ENCODE measurements at regions of chr5 and their contacts with region 1.

Region 1: GRCh38 chr5:96601811-96602244 is 60.3 kb upstream of the CAST start:
- DNase-seq: peak; percentile 86
- H3K4me3 Mint-ChIP-seq: no peak overlapping the region
- H3K27ac Mint-ChIP-seq: no peak overlapping the region
- H3K4me1 Mint-ChIP-seq: peaks cover 6% of the 10 kb centered on the region
- H3K27me3 Mint-ChIP-seq: no peaks in the 10 kb centered on the region
- CTCF ChIP-seq: peak; percentile 65

Region 2: GRCh38 chr5:95858661-95859326 is 743.0 kb before region 1 on chr5:
- CTCF ChIA-PET with region 1: interaction called, 3 read pairs
- POLR2A ChIA-PET with region 1: interaction called, 3 read pairs
- intact Hi-C with region 1: loop called (anchors 1 kb)
- DNase-seq: peak; percentile 96
- H3K4me3 Mint-ChIP-seq: peak overlapping the region; percentile 67
- H3K27ac Mint-ChIP-seq: peak overlapping the region; percentile 99
- H3K4me1 Mint-ChIP-seq: peaks cover 57% of the 10 kb centered on the region
- H3K27me3 Mint-ChIP-seq: no peaks in the 10 kb centered on the region
- CTCF ChIP-seq: peak; percentile 93

Region 3: DNA sequence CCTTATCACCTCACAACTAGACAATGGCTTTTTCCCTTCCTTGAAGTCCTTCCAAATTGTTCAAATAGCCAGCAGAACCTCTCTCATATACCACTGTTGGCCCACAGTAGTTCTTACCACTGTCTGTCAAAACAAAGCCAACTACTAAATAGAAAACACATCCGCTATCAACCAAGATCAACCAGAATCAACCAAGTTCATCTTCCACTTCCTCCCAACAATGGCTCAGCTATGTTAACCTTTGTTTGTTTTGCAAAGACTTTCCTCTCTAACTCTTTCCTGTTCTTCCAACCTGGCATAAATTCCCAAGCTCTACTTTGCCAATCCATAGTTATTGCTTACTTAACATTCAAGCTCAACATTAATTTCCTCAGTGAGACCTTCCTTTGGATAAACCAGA is 655.4 kb before region 1 on chr5:
- CTCF ChIA-PET with region 1: no interaction called
- POLR2A ChIA-PET with region 1: no interaction called
- intact Hi-C with region 1: no loop called
- DNase-seq: no peak
- H3K4me3 Mint-ChIP-seq: no peak overlapping the region
- H3K27ac Mint-ChIP-seq: no peak overlapping the region
- H3K4me1 Mint-ChIP-seq: peaks cover 24% of the 10 kb centered on the region
- H3K27me3 Mint-ChIP-seq: no peaks in the 10 kb centered on the region
- CTCF ChIP-seq: no peak

Region 4: GRCh38 chr5:96247097-96247701 is 354.6 kb before region 1 on chr5:
- CTCF ChIA-PET with region 1: no interaction called
- POLR2A ChIA-PET with region 1: no interaction called
- intact Hi-C with region 1: no loop called
- DNase-seq: no peak
- H3K4me3 Mint-ChIP-seq: no peak overlapping the region
- H3K27ac Mint-ChIP-seq: peak overlapping the region; percentile 56
- H3K4me1 Mint-ChIP-seq: peaks cover 32% of the 10 kb centered on the region
- H3K27me3 Mint-ChIP-seq: no peaks in the 10 kb centered on the region
- CTCF ChIP-seq: no peak

Region 5: GRCh38 chr5:96344678-96345577 is 256.9 kb before region 1 on chr5:
- CTCF ChIA-PET with region 1: interaction called, 492 read pairs
- POLR2A ChIA-PET with region 1: interaction called, 16 read pairs
- intact Hi-C with region 1: loop called (anchors 1 kb)
- DNase-seq: peak; percentile 83
- H3K4me3 Mint-ChIP-seq: no peak overlapping the region
- H3K27ac Mint-ChIP-seq: no peak overlapping the region
- H3K4me1 Mint-ChIP-seq: peaks cover 16% of the 10 kb centered on the region
- H3K27me3 Mint-ChIP-seq: no peaks in the 10 kb centered on the region
- CTCF ChIP-seq: peak; percentile 67

Region 6: DNA sequence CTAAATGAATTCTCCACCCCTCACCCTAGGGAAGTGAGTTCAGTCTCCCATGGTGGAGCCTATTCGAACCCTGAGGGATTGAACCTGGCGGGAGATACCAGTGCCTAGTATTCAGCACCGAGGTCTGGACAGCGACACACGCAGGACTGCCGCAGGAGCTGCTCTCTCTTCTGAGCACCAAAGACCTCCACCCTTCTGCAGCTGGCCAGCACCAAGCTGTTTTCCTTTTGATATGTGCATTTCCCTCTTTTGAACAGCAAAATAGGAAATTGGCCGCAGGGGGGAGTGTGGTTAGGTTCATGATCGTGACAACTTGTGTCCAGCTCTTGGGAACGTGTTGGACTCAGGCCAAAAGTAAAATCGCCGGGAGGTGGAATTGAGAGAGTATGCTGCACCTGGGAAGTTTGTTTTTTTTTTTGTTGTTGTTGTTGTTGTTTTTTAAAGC is 167.6 kb before region 1 on chr5:
- CTCF ChIA-PET with region 1: interaction called, 11 read pairs
- POLR2A ChIA-PET with region 1: no interaction called
- intact Hi-C with region 1: no loop called
- DNase-seq: peak; percentile 78
- H3K4me3 Mint-ChIP-seq: no peak overlapping the region
- H3K27ac Mint-ChIP-seq: no peak overlapping the region
- H3K4me1 Mint-ChIP-seq: peaks cover 5% of the 10 kb centered on the region
- H3K27me3 Mint-ChIP-seq: peaks cover 42% of the 10 kb centered on the region
- CTCF ChIP-seq: no peak

Region 7: DNA sequence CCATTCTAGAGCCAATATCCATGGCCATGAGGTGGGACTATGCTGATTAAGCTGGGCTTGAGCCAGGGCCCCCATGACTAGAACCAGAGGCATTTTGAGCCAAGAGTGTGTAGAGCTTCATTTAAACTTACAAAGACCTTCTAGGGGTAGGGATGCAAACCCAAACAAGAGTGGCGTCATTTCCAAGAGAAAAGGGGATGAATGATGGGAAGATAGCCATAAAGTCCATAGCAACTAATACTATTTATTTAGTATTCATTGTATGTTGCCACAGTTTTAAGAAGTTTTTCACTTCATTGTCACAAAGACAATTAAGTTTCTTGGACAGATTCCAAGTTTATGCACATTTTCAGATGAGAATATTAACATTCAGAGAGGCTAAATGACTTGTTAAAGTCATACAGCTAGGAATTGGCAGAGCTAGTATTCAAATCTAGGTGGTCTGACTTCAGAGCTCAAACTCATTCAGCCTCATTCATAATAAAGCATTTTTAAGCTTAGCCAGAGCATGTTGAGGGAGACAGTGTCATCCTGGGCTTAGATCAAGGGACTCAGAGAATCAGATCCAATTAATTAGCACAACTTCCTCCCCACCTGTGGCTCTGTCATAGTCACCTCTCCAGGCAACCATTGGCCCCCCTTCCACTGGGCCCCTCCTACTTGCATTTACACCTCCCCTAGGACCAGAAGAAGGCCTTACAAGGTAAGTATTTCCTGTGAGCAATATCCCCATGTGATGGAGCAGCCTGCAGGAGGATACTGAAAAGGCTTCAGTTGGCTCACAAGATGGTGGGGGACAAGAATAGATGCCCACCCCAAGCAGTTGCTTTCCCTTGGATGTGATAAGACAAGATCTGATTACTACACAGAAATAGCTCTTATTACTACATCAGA is 73.8 kb before region 1 on chr5:
- CTCF ChIA-PET with region 1: no interaction called
- POLR2A ChIA-PET with region 1: no interaction called
- intact Hi-C with region 1: no loop called
- DNase-seq: no peak
- H3K4me3 Mint-ChIP-seq: no peak overlapping the region
- H3K27ac Mint-ChIP-seq: no peak overlapping the region
- H3K4me1 Mint-ChIP-seq: no peaks in the 10 kb centered on the region
- H3K27me3 Mint-ChIP-seq: no peaks in the 10 kb centered on the region
- CTCF ChIP-seq: no peak

Region 8: DNA sequence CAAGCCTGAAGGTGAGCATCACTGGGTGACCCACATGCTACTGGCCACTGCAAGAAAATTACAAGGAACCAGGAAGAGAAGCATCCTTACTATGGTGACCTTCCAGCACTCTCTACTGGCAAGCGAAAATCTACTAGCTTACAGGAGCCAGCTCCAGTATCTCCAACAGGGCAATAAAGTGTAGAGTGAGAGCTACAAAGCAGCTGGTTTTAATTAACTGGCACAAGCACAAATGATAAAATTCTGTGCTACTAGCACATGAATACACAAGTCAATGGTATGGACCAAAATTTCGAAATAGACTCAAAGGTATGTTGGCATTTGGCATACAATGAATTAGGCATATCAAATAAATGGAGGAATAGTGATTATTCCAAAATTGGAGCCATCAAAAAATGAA is 52.9 kb before region 1 on chr5:
- CTCF ChIA-PET with region 1: interaction called, 13 read pairs
- POLR2A ChIA-PET with region 1: no interaction called
- intact Hi-C with region 1: no loop called
- DNase-seq: no peak
- H3K4me3 Mint-ChIP-seq: no peak overlapping the region
- H3K27ac Mint-ChIP-seq: no peak overlapping the region
- H3K4me1 Mint-ChIP-seq: peaks cover 7% of the 10 kb centered on the region
- H3K27me3 Mint-ChIP-seq: no peaks in the 10 kb centered on the region
- CTCF ChIP-seq: no peak

Region 9: DNA sequence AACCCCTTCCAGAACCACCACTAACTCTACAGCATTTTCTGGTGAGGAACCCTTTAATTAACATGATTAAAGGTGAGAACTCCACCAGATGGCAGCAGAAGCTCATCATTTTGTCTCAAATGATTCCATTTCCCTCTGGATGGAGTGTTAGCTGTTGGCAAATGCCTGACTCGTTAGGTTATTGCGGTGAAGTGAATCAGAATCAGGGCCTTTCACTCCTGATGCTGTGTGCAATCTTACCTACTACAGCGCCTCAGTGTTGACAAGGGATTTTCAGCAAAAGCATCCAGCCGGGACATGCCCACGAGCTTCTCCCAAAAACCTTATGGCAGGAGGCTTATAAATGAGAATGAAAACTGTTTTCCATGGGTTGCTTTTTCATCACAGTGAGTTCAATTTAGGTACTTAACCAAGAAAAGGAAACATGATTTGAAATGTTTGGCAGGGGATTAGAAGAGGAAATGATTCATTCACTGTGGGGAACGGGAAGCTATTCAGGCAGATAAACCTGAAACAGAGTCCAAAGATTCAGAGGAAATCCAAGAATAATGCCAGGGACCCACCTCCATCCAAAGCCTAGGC is 12.4 kb after region 1 on chr5:
- CTCF ChIA-PET with region 1: interaction called, 47 read pairs
- POLR2A ChIA-PET with region 1: interaction called, 3 read pairs
- intact Hi-C with region 1: no loop called
- DNase-seq: peak; percentile 95
- H3K4me3 Mint-ChIP-seq: peak overlapping the region; percentile 33
- H3K27ac Mint-ChIP-seq: peak overlapping the region; percentile 84
- H3K4me1 Mint-ChIP-seq: peaks cover 22% of the 10 kb centered on the region
- H3K27me3 Mint-ChIP-seq: no peaks in the 10 kb centered on the region
- CTCF ChIP-seq: peak; percentile 66

Region 10: DNA sequence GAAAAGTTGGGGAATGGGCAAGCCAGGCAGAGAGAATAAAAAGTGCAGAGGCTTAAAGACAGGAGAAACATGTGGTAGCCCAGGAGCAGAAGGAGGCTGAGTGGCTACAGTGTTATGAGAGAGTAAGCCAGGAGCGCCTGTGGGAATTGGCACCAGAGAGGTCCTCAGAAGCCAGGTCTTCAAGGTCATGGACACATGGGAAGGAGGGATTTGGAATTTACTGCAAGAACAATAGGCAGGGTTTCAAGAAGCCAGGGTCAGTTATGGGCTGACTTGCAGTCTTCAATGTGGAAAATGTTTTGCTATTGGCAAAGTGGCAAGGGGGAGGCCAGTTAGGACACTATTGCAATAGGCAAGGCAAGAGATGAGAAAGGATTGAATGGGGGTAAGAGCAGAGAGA is 176.6 kb after region 1 on chr5:
- CTCF ChIA-PET with region 1: no interaction called
- POLR2A ChIA-PET with region 1: no interaction called
- intact Hi-C with region 1: no loop called
- DNase-seq: no peak
- H3K4me3 Mint-ChIP-seq: no peak overlapping the region
- H3K27ac Mint-ChIP-seq: no peak overlapping the region
- H3K4me1 Mint-ChIP-seq: peaks cover 18% of the 10 kb centered on the region
- H3K27me3 Mint-ChIP-seq: no peaks in the 10 kb centered on the region
- CTCF ChIP-seq: no peak

Measured in MCF 10A (cell line).